AG04449 (cell line): ENCODE measurements at regions of chr9 and their contacts with region 1.

Region 1: DNA sequence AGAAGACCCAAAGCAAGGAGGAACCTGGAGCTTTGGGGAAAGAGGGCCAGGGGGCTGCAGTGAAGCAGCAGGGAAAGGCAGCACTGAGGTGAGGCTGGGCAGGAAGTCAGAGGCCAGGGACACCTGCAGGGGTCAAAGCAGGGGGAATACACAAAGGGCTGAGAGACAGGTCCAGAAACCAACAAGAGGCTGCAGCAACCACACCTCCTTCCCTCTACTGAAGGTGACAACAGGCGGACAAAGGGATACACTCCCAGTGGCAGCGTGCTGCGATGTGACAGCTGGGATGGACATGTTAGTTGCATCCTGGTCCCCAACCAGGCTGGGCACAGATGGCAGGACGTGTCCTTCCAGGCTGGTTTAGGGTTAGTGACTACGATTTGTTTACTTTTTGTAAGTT is 12.6 kb downstream of the CFAP77 start:
- DNase-seq: no peak
- H3K4me3 ChIP-seq: no peak overlapping the region
- CTCF ChIP-seq: no peak

Region 2: DNA sequence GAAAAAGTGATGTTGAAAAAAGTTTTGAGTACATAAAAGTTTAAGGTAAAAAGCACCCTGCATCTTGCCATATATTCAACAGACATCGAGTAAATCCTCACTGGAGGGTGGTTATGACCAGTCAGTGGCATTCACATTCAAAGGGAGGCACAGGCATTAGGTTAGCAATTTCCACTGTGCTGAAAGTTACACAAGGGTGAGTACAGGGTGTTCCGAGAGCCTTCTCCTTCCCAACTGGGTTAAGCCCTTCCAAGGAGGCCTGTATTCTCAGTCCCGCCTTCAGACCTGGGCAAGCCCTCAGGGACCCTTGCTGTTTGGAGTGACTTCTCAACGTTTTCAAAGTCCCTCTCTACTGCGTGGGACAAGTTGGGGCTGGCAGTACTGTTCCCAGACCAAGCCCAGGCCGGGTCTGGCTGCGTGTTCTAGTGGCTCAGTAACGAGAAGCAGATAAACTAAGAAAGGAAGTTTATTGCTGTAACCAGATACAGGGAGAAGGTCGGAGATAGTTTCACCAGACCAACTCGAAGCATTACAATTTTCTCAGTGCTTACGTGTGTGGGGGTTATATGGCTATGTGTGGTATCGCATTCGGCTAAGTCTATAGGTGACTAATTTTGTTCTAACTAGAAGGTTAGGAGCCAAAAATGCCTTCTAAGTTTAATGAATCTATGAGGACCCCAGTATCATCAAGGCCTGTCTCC is 54.8 kb before region 1 on chr9:
- CTCF ChIA-PET with region 1: no interaction called
- POLR2A ChIA-PET with region 1: no interaction called
- DNase-seq: no peak
- H3K4me3 ChIP-seq: no peak overlapping the region
- CTCF ChIP-seq: no peak

Region 3: DNA sequence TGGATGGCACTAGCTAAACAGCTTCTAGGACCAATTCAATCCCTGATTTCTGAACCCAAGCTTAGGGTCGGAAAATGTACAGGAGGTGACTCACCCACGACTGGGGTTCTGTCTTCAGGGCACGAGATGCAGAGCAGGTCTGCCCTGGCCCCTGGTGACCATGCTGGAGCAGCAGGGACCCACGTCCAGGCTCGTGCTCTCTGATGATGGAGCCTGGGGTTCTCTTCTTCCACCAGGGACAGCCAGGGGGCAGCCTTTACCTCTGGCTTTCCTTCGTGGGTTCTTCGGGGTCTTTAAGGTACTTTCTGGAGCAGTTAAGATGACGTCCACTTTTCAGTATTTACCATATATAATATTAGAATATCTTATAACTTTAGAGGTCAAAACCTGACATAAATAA is 10.5 kb before region 1 on chr9:
- CTCF ChIA-PET with region 1: interaction called, 10 read pairs
- POLR2A ChIA-PET with region 1: no interaction called
- DNase-seq: no peak
- H3K4me3 ChIP-seq: no peak overlapping the region
- CTCF ChIP-seq: peak; percentile 53